ENCODE measurements at regions of chrX and their contacts with region 1.

Region 1: GRCh38 chrX:55907968-55908607 is 190.5 kb downstream of the RRAGB start:
- DNase-seq: no peak
- ATAC-seq: peak; percentile 78
- H3K4me3 ChIP-seq: peak overlapping the region; percentile 76
- H3K27ac ChIP-seq: peak overlapping the region; percentile 87
- H3K4me1 ChIP-seq: no peaks in the 10 kb centered on the region; the same call in 1 of the 2 replicates
- H3K27me3 ChIP-seq: no peaks in the 10 kb centered on the region
- CTCF ChIP-seq: peak; percentile 52 to 60 (median 58)
- EP300 ChIP-seq: no peak
- POLR2A ChIP-seq: no peak
- RAD21 ChIP-seq: peak; percentile 58

Region 2: GRCh38 chrX:55488593-55489313 is 419.3 kb before region 1 on chrX:
- CTCF ChIA-PET with region 1: interaction called, 6 read pairs
- POLR2A ChIA-PET with region 1: no interaction called
- RAD21 ChIA-PET with region 1: interaction called, 11 read pairs
- SMC1A ChIA-PET with region 1: no interaction called
- in situ Hi-C with region 1: no loop called
- intact Hi-C with region 1: no loop called
- DNase-seq: peak; percentile 8
- ATAC-seq: peak; percentile 79
- H3K4me3 ChIP-seq: peak overlapping the region; percentile 72
- H3K27ac ChIP-seq: peak overlapping the region; percentile 57
- H3K4me1 ChIP-seq: no peaks in the 10 kb centered on the region
- H3K27me3 ChIP-seq: no peaks in the 10 kb centered on the region
- CTCF ChIP-seq: peak in 1 of 3 experiments; percentile 13; a peak in 1 of 6 replicates
- EP300 ChIP-seq: 0 out of 4 replicates have a peak, but pooled peaks of 1 of the 2 experiments have one; percentile 14
- POLR2A ChIP-seq: peak; percentile 60; the same call in 1 of the 2 replicates
- RAD21 ChIP-seq: no peak

Region 3: GRCh38 chrX:55524487-55524886 is 383.6 kb before region 1 on chrX:
- CTCF ChIA-PET with region 1: no interaction called
- POLR2A ChIA-PET with region 1: no interaction called
- RAD21 ChIA-PET with region 1: no interaction called
- SMC1A ChIA-PET with region 1: no interaction called
- in situ Hi-C with region 1: no loop called
- intact Hi-C with region 1: no loop called
- DNase-seq: no peak
- ATAC-seq: no peak
- H3K4me3 ChIP-seq: no peak overlapping the region
- H3K27ac ChIP-seq: no peak overlapping the region
- H3K4me1 ChIP-seq: no peaks in the 10 kb centered on the region
- H3K27me3 ChIP-seq: no peaks in the 10 kb centered on the region
- CTCF ChIP-seq: no peak
- EP300 ChIP-seq: no peak
- POLR2A ChIP-seq: no peak
- RAD21 ChIP-seq: 0 out of 2 replicates have a peak, but pooled peaks have one; percentile 15

Region 4: GRCh38 chrX:55717521-55718497 is 190.3 kb before region 1 on chrX and contains the start of gene RRAGB:
- CTCF ChIA-PET with region 1: interaction called, 16 read pairs
- POLR2A ChIA-PET with region 1: no interaction called
- RAD21 ChIA-PET with region 1: interaction called, 23 read pairs
- SMC1A ChIA-PET with region 1: interaction called, 19 read pairs
- in situ Hi-C with region 1: no loop called
- intact Hi-C with region 1: loop called (anchors 1 kb)
- DNase-seq: peak; percentile 90
- ATAC-seq: peak; percentile 96
- H3K4me3 ChIP-seq: peak within 1 kb of the TSS; percentile 63
- H3K27ac ChIP-seq: peak within 1 kb of the TSS; percentile 84
- H3K4me1 ChIP-seq: no peaks in the 10 kb centered on the region
- H3K27me3 ChIP-seq: no peaks in the 10 kb centered on the region
- CTCF ChIP-seq: peak; percentile 42 to 65 (median 52); a peak in 5 of 6 replicates
- EP300 ChIP-seq: no peak
- POLR2A ChIP-seq: peak; percentile 80
- RAD21 ChIP-seq: peak; percentile 56
- polyA plus RNA-seq, gene RRAGB: 9.2 to 12.4 TPM

Region 5: DNA sequence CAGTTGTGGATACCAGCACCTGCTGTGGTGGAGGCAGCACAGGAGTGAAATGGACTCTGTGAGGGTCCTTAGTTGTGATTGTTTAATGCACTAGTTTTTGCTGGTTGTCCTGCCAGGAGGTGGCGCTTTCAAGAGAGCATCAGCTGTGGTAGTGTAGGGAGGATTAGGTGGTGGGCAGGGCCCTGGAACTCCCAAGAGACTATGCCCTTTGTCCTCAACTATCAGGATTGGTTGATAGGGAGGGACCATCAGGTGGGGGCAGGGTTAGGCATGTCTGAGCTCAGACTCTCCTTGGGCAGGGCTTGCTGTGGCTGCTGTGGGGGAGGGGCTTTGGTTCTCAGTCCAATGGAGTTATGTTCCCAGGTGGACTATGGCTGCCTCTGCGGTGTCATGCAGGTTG is 68.6 kb before region 1 on chrX:
- CTCF ChIA-PET with region 1: interaction called, 31 read pairs
- POLR2A ChIA-PET with region 1: interaction called, 3 read pairs
- RAD21 ChIA-PET with region 1: interaction called, 32 read pairs
- SMC1A ChIA-PET with region 1: interaction called, 10 read pairs
- in situ Hi-C with region 1: no loop called
- intact Hi-C with region 1: no loop called
- DNase-seq: no peak
- ATAC-seq: peak; percentile 34; the same call in 2 of the 3 replicates
- H3K4me3 ChIP-seq: no peak overlapping the region
- H3K27ac ChIP-seq: no peak overlapping the region
- H3K4me1 ChIP-seq: no peaks in the 10 kb centered on the region
- H3K27me3 ChIP-seq: no peaks in the 10 kb centered on the region
- CTCF ChIP-seq: no peak
- EP300 ChIP-seq: no peak
- POLR2A ChIP-seq: no peak
- RAD21 ChIP-seq: peak; percentile 34; the same call in 1 of the 2 replicates

Region 6: DNA sequence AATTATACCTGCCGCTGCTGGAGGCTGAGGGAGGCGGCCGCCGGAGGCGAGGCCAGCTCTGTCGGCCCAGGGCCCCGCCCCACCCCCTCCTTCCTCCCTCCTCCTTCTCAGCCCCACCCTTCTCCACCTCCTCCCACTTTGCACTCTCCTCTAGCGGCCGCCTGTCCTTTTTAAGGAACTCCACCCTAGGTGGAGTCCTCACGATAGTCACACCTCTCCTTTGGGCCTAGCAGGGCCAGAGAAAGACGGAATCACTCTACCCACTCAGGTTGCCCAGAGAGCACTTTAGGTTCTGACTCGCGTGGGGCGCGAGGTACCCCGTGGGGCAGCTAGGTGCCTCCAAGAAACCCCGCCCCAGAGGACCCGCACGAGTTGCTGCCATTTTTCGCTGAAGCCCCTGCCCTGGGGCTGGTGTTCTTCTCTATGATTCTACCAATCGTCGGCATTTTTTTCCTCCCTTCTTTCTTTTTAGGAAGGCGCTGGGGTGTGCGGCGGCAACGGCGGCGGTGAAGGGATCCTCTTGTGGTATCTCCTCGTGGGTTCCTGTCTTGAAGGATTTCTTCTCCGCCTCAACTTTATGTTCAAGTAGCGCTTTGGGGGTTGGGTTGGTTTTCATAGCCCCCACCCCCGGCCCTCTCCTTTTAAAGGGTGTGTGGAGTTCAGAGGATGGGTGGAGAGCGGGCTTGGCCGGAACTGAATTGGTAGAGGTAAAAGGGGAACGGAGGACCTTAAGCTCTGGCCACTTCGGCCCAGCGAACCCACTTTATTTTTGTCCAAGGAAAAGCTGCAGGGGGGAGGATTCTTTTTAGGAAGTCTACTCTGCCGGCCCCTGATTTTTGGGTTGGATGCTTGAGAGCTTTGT is 324.4 kb after region 1 on chrX and contains the start of gene KLF8:
- CTCF ChIA-PET with region 1: interaction called, 3 read pairs
- POLR2A ChIA-PET with region 1: interaction called, 3 read pairs
- RAD21 ChIA-PET with region 1: interaction called, 24 read pairs
- SMC1A ChIA-PET with region 1: interaction called, 9 read pairs
- in situ Hi-C with region 1: no loop called
- intact Hi-C with region 1: no loop called
- DNase-seq: no peak
- ATAC-seq: peak; percentile 79
- H3K4me3 ChIP-seq: peak within 1 kb of the TSS; percentile 49
- H3K27ac ChIP-seq: peak within 1 kb of the TSS; percentile 25; the same call in 1 of the 2 replicates
- H3K4me1 ChIP-seq: no peaks in the 10 kb centered on the region
- H3K27me3 ChIP-seq: no peaks in the 10 kb centered on the region
- CTCF ChIP-seq: no peak
- EP300 ChIP-seq: no peak
- POLR2A ChIP-seq: no peak
- RAD21 ChIP-seq: no peak
- polyA plus RNA-seq, gene KLF8: 0.31 to 0.39 TPM

Measured in GM12878 (cell line).